Transverse colon (tissue), 4 donors: ENCODE measurements at regions of chr7 and their contacts with region 1.

Region 1: DNA sequence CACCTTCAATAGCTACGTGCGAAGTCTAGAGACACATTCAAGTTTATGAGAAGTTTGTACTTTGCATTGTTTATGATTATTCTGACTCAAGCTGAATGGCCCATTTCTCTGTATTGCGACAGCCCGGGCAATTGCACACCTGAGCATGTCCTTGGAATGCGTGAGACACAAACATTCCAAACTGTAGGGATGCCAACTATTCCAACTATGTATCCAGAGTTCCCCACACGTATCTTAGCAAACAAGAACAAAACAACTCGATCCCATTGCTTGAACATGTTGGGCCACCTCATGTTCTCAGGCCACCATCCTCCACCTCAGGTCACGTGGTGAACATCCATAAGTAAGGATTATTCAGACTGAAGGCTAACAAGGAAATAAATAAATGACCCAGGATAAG is 51.4 kb upstream of the EGFR start:
- DNase-seq: no peak
- H3K4me3 ChIP-seq: no peak overlapping the region
- H3K27ac ChIP-seq: no peak overlapping the region
- H3K4me1 ChIP-seq: no peaks in the 10 kb centered on the region
- H3K27me3 ChIP-seq: no peaks in the 10 kb centered on the region
- CTCF ChIP-seq: no peak
- EP300 ChIP-seq: no peak
- POLR2A ChIP-seq: no peak

Region 2: GRCh38 chr7:55073945-55074499 is 106.6 kb after region 1 on chr7:
- in situ Hi-C with region 1: loop called in 1 of 4 experiments (anchors 25 kb)
- intact Hi-C with region 1: no loop called
- DNase-seq: peak; percentile 91
- H3K4me3 ChIP-seq: peak overlapping the region in 2 of 4 donors; percentile 4 to 30
- H3K27ac ChIP-seq: peak overlapping the region; percentile 86 to 92 (median 89)
- H3K4me1 ChIP-seq: peaks cover 65 to 81% (median 74%) of the 10 kb centered on the region in 4 donors
- H3K27me3 ChIP-seq: no peaks in the 10 kb centered on the region
- CTCF ChIP-seq: no peak
- EP300 ChIP-seq: peak; percentile 91
- POLR2A ChIP-seq: no peak

Region 3: DNA sequence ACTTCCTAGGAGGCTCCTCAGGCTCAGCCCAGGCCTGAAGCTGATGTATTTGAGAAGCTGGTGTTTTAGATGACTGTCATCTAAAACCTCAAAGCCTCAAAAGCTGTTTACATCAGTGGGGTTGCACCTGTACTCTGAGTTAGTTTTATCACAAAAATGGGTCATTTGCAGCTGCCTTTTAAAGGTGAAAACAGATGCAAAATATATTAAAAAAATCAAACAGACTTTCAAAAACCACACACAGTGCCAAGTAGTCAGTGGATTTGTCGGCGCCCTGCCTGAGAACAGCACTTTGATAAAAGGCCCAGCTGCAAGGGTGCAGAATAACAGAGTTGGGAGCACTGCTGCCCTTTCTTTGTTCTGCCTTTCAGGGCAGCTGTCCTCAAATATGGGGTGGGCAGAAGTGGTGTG is 501.9 kb after region 1 on chr7:
- in situ Hi-C with region 1: no loop called
- intact Hi-C with region 1: no loop called
- DNase-seq: peak; percentile 32
- H3K4me3 ChIP-seq: no peak overlapping the region
- H3K27ac ChIP-seq: peak overlapping the region in 1 of 4 donors; percentile 14
- H3K4me1 ChIP-seq: no peaks in the 10 kb centered on the region
- H3K27me3 ChIP-seq: no peaks in the 10 kb centered on the region
- CTCF ChIP-seq: no peak
- EP300 ChIP-seq: no peak
- POLR2A ChIP-seq: no peak